Activated T-helper 2 cell treated with anti-CD3 and anti-CD28 coated beads, Interferon-gamma antibody, Interleukin-2, Interleukin-4, amounts not matched to agents 10 μg/mL and 5 μg/mL and 100 μg/mL, durations not matched to agents 14 hours and 24 hours and 36 hours (primary cell): ENCODE measurements at regions of chr17 and their contacts with region 1.

Region 1: DNA sequence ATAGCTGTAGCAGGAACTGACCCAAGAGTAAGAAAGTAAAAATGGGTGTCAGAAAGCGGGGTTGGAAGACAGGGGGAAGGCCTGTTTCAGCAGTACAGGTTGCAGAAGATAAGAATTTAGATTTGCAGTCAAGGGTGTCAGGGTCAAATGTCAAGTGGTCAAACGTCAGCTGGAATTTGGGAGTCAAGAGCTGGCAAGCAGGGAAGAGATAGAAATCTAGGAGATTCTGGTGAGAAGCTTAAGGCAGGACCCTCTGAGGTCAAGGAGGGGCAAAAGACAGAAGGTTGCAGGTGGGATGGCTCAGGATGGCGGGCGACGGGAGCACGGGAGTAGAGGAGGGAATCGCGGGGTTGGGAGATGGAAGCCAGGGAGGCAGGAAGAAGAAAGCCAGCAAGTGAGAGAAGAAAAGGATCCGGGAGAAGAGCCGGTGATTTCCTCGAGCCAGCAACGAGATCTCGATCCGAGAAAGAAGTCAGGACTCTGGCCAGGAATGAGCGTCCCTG is 335 bp downstream of the SLC25A35 start:
- DNase-seq: no peak
- H3K4me3 Mint-ChIP-seq: peak overlapping the region; percentile 90
- H3K27ac Mint-ChIP-seq: peak overlapping the region; percentile 91
- H3K4me1 Mint-ChIP-seq: peaks cover 33% of the 10 kb centered on the region
- H3K27me3 Mint-ChIP-seq: no peaks in the 10 kb centered on the region

Region 2: GRCh38 chr17:8248751-8249607 is 45.9 kb before region 1 on chr17 and contains the start of gene PFAS:
- intact Hi-C with region 1: loop called (anchors 1 kb)
- DNase-seq: peak; percentile 95
- H3K4me3 Mint-ChIP-seq: peak within 1 kb of the TSS; percentile 99
- H3K27ac Mint-ChIP-seq: peak within 1 kb of the TSS; percentile 100
- H3K4me1 Mint-ChIP-seq: peaks cover 30% of the 10 kb centered on the region
- H3K27me3 Mint-ChIP-seq: no peaks in the 10 kb centered on the region
- total RNA-seq, gene PFAS: 165 and 174 TPM in 2 replicates